Activated B cell treated with CpG ODN at 0.5 μM for 24 hours (primary cell): ENCODE measurements at regions of chr2 and their contacts with region 1.

Region 1: DNA sequence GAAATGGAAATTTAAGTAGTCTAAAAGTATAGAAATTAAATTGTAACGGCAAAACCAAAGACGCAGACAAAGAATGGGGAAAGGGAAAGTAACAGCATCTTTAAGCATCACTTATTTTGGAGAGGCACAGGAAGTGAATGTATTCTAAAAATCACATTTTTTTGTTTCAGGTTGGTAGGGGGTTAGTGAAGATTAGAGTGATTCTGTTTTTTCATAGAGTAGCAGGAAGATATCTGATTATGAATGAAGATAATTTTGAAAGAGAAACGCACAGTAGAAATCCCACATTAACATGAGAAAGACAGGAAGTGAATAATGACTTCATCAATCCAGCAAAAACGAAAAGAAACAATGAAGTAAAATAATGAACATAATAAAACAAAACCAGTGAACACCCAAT is 131.2 kb downstream of the STRN start:
- DNase-seq: no peak
- ATAC-seq: no peak
- H3K4me3 Mint-ChIP-seq: no peak overlapping the region
- H3K27ac Mint-ChIP-seq: no peak overlapping the region
- H3K4me1 Mint-ChIP-seq: no peaks in the 10 kb centered on the region
- H3K27me3 Mint-ChIP-seq: peaks cover 8% of the 10 kb centered on the region
- CTCF ChIP-seq: no peak

Region 2: GRCh38 chr2:36789191-36789804 is 45.8 kb before region 1 on chr2:
- CTCF ChIA-PET with region 1: no interaction called
- POLR2A ChIA-PET with region 1: no interaction called
- intact Hi-C with region 1: no loop called
- DNase-seq: no peak
- ATAC-seq: no peak
- H3K4me3 Mint-ChIP-seq: no peak overlapping the region
- H3K27ac Mint-ChIP-seq: no peak overlapping the region
- H3K4me1 Mint-ChIP-seq: peaks cover 10% of the 10 kb centered on the region
- H3K27me3 Mint-ChIP-seq: no peaks in the 10 kb centered on the region
- CTCF ChIP-seq: no peak

Region 3: GRCh38 chr2:36807223-36807900 is 27.8 kb before region 1 on chr2:
- CTCF ChIA-PET with region 1: no interaction called
- POLR2A ChIA-PET with region 1: no interaction called
- intact Hi-C with region 1: loop called (anchors 1 kb)
- DNase-seq: no peak
- ATAC-seq: no peak
- H3K4me3 Mint-ChIP-seq: no peak overlapping the region
- H3K27ac Mint-ChIP-seq: no peak overlapping the region
- H3K4me1 Mint-ChIP-seq: no peaks in the 10 kb centered on the region
- H3K27me3 Mint-ChIP-seq: peaks cover 4% of the 10 kb centered on the region
- CTCF ChIP-seq: no peak

Region 4: DNA sequence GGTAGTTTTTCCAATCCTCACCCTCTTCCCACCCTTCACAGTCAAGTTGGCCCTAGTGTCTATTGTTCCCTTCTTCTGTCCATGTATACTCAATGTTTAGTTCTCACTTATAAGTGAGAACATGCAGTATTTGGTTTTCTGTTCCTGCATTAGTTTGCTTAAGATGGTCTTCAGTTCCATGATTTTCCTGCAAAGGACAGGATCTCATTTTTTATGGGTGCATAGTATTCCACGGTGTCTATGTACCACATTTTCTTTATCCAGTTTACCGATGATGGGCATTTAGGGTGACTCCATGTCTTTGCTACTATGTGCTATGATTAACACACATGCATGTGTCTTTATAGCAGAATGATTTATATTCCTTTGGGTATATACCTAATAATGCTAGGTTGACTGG is 26.8 kb after region 1 on chr2:
- CTCF ChIA-PET with region 1: no interaction called
- POLR2A ChIA-PET with region 1: no interaction called
- intact Hi-C with region 1: no loop called
- DNase-seq: no peak
- ATAC-seq: no peak
- H3K4me3 Mint-ChIP-seq: no peak overlapping the region
- H3K27ac Mint-ChIP-seq: no peak overlapping the region
- H3K4me1 Mint-ChIP-seq: no peaks in the 10 kb centered on the region
- H3K27me3 Mint-ChIP-seq: no peaks in the 10 kb centered on the region
- CTCF ChIP-seq: no peak

Region 5: DNA sequence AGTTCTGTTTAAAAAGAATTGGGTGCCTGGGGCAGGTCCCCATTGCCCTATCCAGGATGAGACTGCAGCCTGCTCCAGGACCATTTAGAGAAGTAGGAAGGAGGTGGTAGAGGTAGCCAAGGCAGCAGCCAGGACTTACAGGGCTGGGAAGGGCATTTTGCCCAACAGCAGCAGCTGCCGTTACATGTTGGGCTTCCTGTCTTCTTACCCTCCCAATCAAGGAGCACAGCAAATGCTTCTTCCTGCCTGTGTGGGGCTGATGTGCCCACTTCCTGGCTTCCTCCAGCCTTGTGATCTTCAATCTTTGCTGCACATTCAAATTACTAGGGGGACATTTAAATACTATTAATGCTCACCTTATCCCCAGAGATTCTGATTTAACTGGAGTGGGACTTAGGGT is 621.4 kb after region 1 on chr2:
- CTCF ChIA-PET with region 1: no interaction called
- POLR2A ChIA-PET with region 1: no interaction called
- intact Hi-C with region 1: no loop called
- DNase-seq: no peak
- ATAC-seq: no peak
- H3K4me3 Mint-ChIP-seq: no peak overlapping the region
- H3K27ac Mint-ChIP-seq: no peak overlapping the region
- H3K4me1 Mint-ChIP-seq: peaks cover 5% of the 10 kb centered on the region
- H3K27me3 Mint-ChIP-seq: no peaks in the 10 kb centered on the region
- CTCF ChIP-seq: no peak